Activated B cell treated with CpG ODN at 0.5 μM for 24 hours (primary cell): ENCODE measurements at regions of chr11 and their contacts with region 1.

Region 1: DNA sequence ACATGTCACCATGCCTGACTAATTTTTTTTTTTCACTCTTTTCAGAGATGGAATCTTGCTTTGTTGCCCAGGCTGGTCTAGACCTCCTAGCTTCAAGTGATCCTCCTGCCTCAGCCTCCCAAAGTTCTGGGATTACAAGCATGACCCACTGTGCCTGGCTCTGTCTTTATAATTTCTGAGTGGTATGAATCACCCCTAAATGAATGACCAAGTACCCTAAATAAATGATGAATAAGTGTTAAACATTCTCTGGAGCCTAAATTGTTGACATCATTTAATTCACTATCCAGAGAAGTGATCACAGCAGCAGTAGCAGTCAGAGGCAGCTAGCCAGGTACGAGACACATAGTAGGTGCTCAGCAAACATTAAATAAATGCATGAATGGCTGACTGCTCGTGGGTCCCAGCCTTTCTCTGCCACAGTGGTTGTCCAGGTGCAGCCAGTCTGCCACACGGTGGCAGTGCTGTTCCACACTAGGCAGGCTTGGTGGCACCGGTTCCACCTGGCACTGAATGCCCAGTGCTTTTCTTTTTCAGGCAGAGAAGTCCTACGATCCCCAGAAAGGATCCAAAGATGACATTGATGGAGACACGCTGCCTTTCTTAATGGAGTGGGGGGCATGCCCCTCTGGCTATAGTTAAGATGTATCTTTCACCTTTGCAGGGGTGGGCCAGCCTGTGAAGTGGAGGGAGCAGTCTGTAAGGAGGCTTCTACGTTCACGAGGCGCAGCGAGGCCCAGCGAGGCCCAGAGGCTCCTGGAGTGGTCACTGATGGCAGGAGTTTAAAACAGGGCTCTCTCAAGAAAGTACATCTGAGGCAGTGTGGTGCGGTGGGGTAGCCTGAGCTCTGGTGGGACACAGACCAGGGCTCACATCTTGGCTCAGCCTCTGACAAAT is 8.7 kb upstream of the TTC12 start:
- DNase-seq: peak; percentile 48
- ATAC-seq: peak; percentile 89
- H3K4me3 Mint-ChIP-seq: no peak overlapping the region
- H3K27ac Mint-ChIP-seq: no peak overlapping the region
- H3K4me1 Mint-ChIP-seq: no peaks in the 10 kb centered on the region
- H3K27me3 Mint-ChIP-seq: peaks cover 5% of the 10 kb centered on the region
- CTCF ChIP-seq: no peak

Region 2: GRCh38 chr11:112999520-112999919 is 306.2 kb before region 1 on chr11:
- CTCF ChIA-PET with region 1: no interaction called
- POLR2A ChIA-PET with region 1: no interaction called
- intact Hi-C with region 1: no loop called
- DNase-seq: no peak
- ATAC-seq: no peak
- H3K4me3 Mint-ChIP-seq: no peak overlapping the region
- H3K27ac Mint-ChIP-seq: no peak overlapping the region
- H3K4me1 Mint-ChIP-seq: no peaks in the 10 kb centered on the region
- H3K27me3 Mint-ChIP-seq: no peaks in the 10 kb centered on the region
- CTCF ChIP-seq: no peak

Region 3: GRCh38 chr11:113091481-113091780 is 214.3 kb before region 1 on chr11:
- CTCF ChIA-PET with region 1: no interaction called
- POLR2A ChIA-PET with region 1: no interaction called
- intact Hi-C with region 1: no loop called
- DNase-seq: no peak
- ATAC-seq: no peak
- H3K4me3 Mint-ChIP-seq: no peak overlapping the region
- H3K27ac Mint-ChIP-seq: no peak overlapping the region
- H3K4me1 Mint-ChIP-seq: no peaks in the 10 kb centered on the region
- H3K27me3 Mint-ChIP-seq: no peaks in the 10 kb centered on the region
- CTCF ChIP-seq: no peak

Region 4: DNA sequence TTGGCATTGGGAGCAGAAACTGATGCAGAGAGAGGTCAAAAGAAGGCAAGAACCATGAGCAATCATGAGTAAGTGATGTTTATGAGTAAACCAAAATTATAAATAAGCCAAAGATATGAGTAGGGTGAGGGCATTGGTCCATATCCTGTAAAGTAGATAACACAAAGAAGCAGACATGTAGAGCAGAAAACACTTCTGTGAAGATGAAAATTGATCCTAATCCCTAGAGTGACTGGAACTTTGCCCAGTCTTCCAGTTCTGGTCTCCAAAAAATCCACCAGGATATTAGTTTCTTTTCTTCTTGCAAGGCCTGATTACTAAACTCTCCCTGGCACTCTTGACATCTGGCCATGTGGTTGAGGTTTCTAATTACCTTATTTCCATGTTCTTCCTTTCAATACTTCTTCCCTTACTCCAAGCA is 183.3 kb after region 1 on chr11:
- CTCF ChIA-PET with region 1: no interaction called
- POLR2A ChIA-PET with region 1: no interaction called
- intact Hi-C with region 1: no loop called
- DNase-seq: no peak
- ATAC-seq: no peak
- H3K4me3 Mint-ChIP-seq: no peak overlapping the region
- H3K27ac Mint-ChIP-seq: no peak overlapping the region
- H3K4me1 Mint-ChIP-seq: peaks cover 8% of the 10 kb centered on the region
- H3K27me3 Mint-ChIP-seq: peaks cover 3% of the 10 kb centered on the region
- CTCF ChIP-seq: no peak

Region 5: DNA sequence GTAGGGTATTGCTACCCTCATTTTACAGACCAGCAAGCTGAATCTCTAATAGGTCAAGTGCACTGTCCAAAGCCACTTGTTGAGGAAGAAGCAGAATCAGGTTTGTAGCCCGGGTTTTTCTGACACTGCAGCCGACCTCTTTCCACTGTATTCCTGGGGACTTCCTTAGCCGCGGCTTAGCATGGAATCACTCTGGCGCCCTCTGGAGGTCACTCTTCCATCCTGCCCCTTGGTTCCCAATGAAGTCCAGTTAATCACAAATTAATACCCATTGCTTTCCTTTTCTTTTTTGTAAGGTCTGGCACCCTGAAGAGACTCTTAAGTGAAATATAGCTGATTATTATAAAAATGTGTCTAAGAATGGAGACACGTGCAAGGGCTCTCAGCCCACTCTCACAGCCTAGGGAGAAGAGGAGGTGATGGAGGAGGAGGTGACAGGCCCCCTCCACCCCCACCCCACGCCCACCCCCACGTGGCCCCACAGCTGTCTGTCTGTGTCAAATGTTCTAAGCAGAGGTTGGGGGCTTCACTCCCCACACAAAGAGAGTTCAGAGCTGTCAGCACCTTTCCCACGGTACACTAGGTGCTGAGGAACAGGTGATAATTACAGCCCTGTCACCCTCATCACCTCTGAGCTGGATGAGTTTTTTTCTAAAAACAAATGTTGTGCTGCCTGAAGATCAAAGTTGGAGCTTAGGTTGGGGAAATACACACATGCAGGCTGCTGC is 227.2 kb after region 1 on chr11:
- CTCF ChIA-PET with region 1: interaction called, 18 read pairs
- POLR2A ChIA-PET with region 1: no interaction called
- intact Hi-C with region 1: loop called (anchors 1 kb)
- DNase-seq: peak; percentile 24
- ATAC-seq: peak; percentile 31
- H3K4me3 Mint-ChIP-seq: no peak overlapping the region
- H3K27ac Mint-ChIP-seq: no peak overlapping the region
- H3K4me1 Mint-ChIP-seq: no peaks in the 10 kb centered on the region
- H3K27me3 Mint-ChIP-seq: peaks cover 10% of the 10 kb centered on the region
- CTCF ChIP-seq: peak; percentile 41

Region 6: GRCh38 chr11:113796663-113797259 is 491.1 kb after region 1 on chr11:
- CTCF ChIA-PET with region 1: interaction called, 9 read pairs
- POLR2A ChIA-PET with region 1: no interaction called
- intact Hi-C with region 1: loop called (anchors 1 kb)
- DNase-seq: no peak
- ATAC-seq: peak; percentile 60
- H3K4me3 Mint-ChIP-seq: no peak overlapping the region
- H3K27ac Mint-ChIP-seq: no peak overlapping the region
- H3K4me1 Mint-ChIP-seq: no peaks in the 10 kb centered on the region
- H3K27me3 Mint-ChIP-seq: no peaks in the 10 kb centered on the region
- CTCF ChIP-seq: peak; percentile 32

Region 7: GRCh38 chr11:113831314-113831713 is 525.6 kb after region 1 on chr11:
- CTCF ChIA-PET with region 1: no interaction called
- POLR2A ChIA-PET with region 1: no interaction called
- intact Hi-C with region 1: no loop called
- DNase-seq: no peak
- ATAC-seq: peak; percentile 93
- H3K4me3 Mint-ChIP-seq: peak overlapping the region; percentile 68
- H3K27ac Mint-ChIP-seq: peak overlapping the region; percentile 84
- H3K4me1 Mint-ChIP-seq: peaks cover 31% of the 10 kb centered on the region
- H3K27me3 Mint-ChIP-seq: no peaks in the 10 kb centered on the region
- CTCF ChIP-seq: no peak